RWPE1 (cell line): ENCODE measurements at regions of chr1 and their contacts with region 1.

Region 1: GRCh38 chr1:9494929-9495758 is 44.1 kb upstream of the SLC25A33 start:
- DNase-seq: peak; percentile 51
- H3K27ac ChIP-seq: no peak overlapping the region
- CTCF ChIP-seq: peak; percentile 96

Region 2: GRCh38 chr1:9262096-9262986 is 232.8 kb before region 1 on chr1:
- CTCF ChIA-PET with region 1: interaction called, 30 read pairs
- POLR2A ChIA-PET with region 1: no interaction called
- DNase-seq: no peak
- H3K27ac ChIP-seq: no peak overlapping the region
- CTCF ChIP-seq: no peak

Region 3: GRCh38 chr1:9270290-9270883 is 224.8 kb before region 1 on chr1:
- CTCF ChIA-PET with region 1: interaction called, 30 read pairs
- POLR2A ChIA-PET with region 1: no interaction called
- DNase-seq: no peak
- H3K27ac ChIP-seq: peak overlapping the region; percentile 45; the same call in 1 of the 2 replicates
- CTCF ChIP-seq: no peak

Region 4: DNA sequence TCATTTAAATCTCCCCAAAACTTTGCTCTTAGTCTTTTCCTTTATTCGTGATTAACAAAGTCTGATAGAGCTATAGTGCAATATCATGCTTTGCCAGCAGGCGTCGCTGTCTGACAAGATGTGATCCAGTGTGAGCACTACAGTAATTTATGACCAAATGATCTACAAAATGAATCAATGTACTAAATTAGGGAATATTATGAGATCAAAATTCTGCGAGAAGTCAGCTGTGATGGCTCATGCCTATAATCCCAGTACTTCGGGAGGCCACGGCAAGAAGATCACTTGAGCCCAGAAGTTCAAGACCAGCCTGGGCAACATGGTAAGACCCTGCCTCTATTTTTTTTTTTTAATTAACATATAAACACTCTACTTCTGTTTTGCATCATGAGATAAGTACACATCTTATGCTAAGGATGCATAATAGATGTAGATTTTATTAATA is 206.0 kb before region 1 on chr1:
- CTCF ChIA-PET with region 1: interaction called, 15 read pairs
- POLR2A ChIA-PET with region 1: no interaction called
- DNase-seq: no peak
- H3K27ac ChIP-seq: no peak overlapping the region
- CTCF ChIP-seq: peak; percentile 68

Region 5: DNA sequence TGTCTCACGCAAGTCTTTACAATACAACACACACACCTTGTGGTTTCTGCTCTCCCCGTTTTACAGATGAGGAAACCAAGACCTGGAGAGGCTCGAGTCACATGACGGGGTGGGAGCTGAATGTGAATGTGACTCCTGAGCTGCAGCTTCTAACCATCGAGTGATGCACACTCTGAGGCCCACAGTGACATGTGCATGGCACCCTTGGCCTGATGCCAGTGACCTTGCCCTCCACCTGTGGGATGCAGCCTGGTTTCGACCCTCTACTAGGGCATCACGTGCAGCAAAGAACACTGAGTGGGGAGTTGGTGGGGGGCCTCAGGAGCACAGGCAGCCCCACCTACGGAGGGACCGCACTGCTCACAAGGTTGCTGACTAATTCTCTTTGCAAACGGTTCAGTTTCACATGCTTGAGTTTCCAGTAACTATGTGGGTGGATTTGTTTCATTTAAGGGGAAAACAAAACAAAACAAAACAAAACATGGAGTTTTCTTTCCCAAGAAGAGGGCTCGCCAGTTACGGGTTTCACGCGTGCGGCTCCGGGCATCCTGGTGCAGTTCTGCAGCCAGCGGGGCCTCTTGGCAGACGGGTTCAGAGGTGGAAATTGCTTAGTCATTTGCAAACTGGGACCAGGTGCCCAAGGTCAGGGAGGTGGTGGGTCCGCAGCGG is 179.6 kb before region 1 on chr1:
- CTCF ChIA-PET with region 1: no interaction called
- POLR2A ChIA-PET with region 1: no interaction called
- DNase-seq: no peak
- H3K27ac ChIP-seq: peak overlapping the region; percentile 83
- CTCF ChIP-seq: no peak

Region 6: GRCh38 chr1:9435153-9435636 is 59.9 kb before region 1 on chr1:
- CTCF ChIA-PET with region 1: no interaction called
- POLR2A ChIA-PET with region 1: no interaction called
- DNase-seq: no peak
- H3K27ac ChIP-seq: no peak overlapping the region
- CTCF ChIP-seq: no peak

Region 7: GRCh38 chr1:9573723-9574122 is 78.6 kb after region 1 on chr1:
- CTCF ChIA-PET with region 1: interaction called, 25 read pairs
- POLR2A ChIA-PET with region 1: no interaction called
- DNase-seq: no peak
- H3K27ac ChIP-seq: no peak overlapping the region
- CTCF ChIP-seq: peak; percentile 26; the same call in 1 of the 2 replicates